MCF 10A (cell line): ENCODE measurements at regions of chr1 and their contacts with region 1.

Region 1: DNA sequence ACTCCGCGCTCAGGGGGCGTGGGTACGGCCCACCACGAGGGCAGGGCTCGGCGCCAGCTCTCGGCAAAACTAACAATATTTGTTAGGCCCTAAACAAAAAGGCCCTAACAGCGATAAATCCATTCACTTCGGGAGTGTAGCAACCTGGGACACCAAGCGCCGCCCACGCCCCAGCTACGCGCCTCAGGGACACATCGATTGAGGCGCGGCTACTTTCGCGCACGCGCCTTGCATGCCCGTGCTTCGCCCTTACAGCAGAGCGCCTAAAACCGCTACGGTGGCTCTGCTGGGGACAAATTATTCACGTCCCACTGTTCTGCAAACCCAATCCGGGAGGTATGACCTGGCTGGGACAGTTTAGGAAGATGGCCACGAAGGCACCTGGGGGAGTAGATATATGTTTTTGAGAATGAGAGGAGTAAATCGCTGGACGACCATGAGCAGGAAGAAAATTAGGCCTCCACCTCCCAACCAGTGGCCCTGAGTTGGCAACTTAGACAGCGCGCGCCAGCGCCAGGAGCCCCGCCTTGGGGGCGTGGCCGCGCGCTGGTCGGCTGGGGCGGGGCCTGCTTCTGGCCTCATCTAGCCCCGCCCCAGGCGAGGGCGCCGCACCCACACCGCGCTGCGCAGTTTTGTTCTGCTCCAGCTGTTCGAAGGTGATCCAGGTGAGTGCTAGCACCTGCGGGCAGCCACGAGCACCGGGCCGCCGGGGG is at the start of gene MGST3:
- DNase-seq: peak; percentile 99
- H3K4me3 Mint-ChIP-seq: no peak within 1 kb of the TSS
- H3K27ac Mint-ChIP-seq: no peak within 1 kb of the TSS
- H3K4me1 Mint-ChIP-seq: peaks cover 22% of the 10 kb centered on the region
- H3K27me3 Mint-ChIP-seq: no peaks in the 10 kb centered on the region
- CTCF ChIP-seq: no peak
- total RNA-seq, gene MGST3: 75.5 and 97.1 TPM in 2 replicates

Region 2: DNA sequence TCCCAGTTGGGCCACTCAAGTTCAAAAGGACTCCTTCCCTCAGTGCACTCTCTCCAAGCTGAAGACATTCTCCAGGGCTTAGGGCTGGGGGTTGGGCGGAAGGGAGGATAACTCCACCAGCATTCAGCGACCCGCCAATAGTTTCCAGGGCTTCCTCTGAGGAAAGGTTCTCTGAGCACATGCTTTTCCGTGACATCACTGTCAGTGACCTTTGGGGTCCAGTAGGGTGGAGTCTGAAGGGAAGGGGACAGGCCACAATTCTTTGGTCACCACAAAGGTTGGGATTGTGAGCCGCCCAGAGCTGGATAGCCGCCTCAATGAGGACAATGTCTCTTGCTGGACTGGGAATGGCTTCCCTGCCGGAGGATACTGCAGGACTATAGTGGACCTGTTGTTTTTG is 163.1 kb before region 1 on chr1:
- CTCF ChIA-PET with region 1: no interaction called
- POLR2A ChIA-PET with region 1: no interaction called
- intact Hi-C with region 1: no loop called
- DNase-seq: no peak
- H3K4me3 Mint-ChIP-seq: no peak overlapping the region
- H3K27ac Mint-ChIP-seq: no peak overlapping the region
- H3K4me1 Mint-ChIP-seq: no peaks in the 10 kb centered on the region
- H3K27me3 Mint-ChIP-seq: peaks cover 81% of the 10 kb centered on the region
- CTCF ChIP-seq: no peak

Region 3: GRCh38 chr1:165645654-165646366 is 15.0 kb after region 1 on chr1:
- CTCF ChIA-PET with region 1: interaction called, 10 read pairs
- POLR2A ChIA-PET with region 1: interaction called, 46 read pairs
- intact Hi-C with region 1: no loop called
- DNase-seq: peak; percentile 42
- H3K4me3 Mint-ChIP-seq: no peak overlapping the region
- H3K27ac Mint-ChIP-seq: no peak overlapping the region
- H3K4me1 Mint-ChIP-seq: peaks cover 17% of the 10 kb centered on the region
- H3K27me3 Mint-ChIP-seq: no peaks in the 10 kb centered on the region
- CTCF ChIP-seq: no peak

Region 4: GRCh38 chr1:165659581-165659895 is 28.8 kb after region 1 on chr1:
- CTCF ChIA-PET with region 1: interaction called, 3 read pairs
- POLR2A ChIA-PET with region 1: interaction called, 35 read pairs
- intact Hi-C with region 1: no loop called
- DNase-seq: no peak
- H3K4me3 Mint-ChIP-seq: no peak overlapping the region
- H3K27ac Mint-ChIP-seq: no peak overlapping the region
- H3K4me1 Mint-ChIP-seq: no peaks in the 10 kb centered on the region
- H3K27me3 Mint-ChIP-seq: no peaks in the 10 kb centered on the region
- CTCF ChIP-seq: no peak

Region 5: GRCh38 chr1:165678509-165678908 is 47.7 kb after region 1 on chr1:
- CTCF ChIA-PET with region 1: no interaction called
- POLR2A ChIA-PET with region 1: interaction called, 6 read pairs
- intact Hi-C with region 1: loop called (anchors 5 kb)
- DNase-seq: no peak
- H3K4me3 Mint-ChIP-seq: no peak overlapping the region
- H3K27ac Mint-ChIP-seq: no peak overlapping the region
- H3K4me1 Mint-ChIP-seq: peaks cover 6% of the 10 kb centered on the region
- H3K27me3 Mint-ChIP-seq: no peaks in the 10 kb centered on the region
- CTCF ChIP-seq: no peak

Region 6: GRCh38 chr1:165768513-165769394 is 138.0 kb after region 1 on chr1 and contains the start of gene TMCO1:
- CTCF ChIA-PET with region 1: interaction called, 4 read pairs
- POLR2A ChIA-PET with region 1: interaction called, 19 read pairs
- intact Hi-C with region 1: loop called (anchors 2 kb)
- DNase-seq: peak; percentile 100
- H3K4me3 Mint-ChIP-seq: peak within 1 kb of the TSS; percentile 95
- H3K27ac Mint-ChIP-seq: peak within 1 kb of the TSS; percentile 98
- H3K4me1 Mint-ChIP-seq: peaks cover 46% of the 10 kb centered on the region
- H3K27me3 Mint-ChIP-seq: no peaks in the 10 kb centered on the region
- CTCF ChIP-seq: no peak
- total RNA-seq, gene TMCO1: 158 and 202 TPM in 2 replicates

Region 7: DNA sequence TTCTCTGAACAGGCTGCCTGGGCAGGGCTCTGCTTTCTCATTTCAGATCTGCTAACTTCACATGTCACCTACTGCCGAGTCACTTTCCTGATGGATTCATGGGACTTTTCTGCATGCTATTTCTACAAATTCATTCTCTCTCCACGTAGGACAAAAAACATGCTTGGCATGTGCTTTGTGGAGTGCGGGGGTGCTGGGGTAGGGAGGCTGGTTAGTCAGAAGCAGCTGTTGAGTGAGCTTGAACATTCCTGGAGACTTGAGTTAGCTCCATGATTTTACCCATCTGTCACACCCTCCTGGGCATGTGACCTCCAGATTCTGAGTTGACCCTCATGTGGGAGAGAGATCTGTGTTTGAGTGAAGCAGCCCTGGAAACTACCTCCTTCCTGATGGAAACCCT is 268.1 kb after region 1 on chr1:
- CTCF ChIA-PET with region 1: interaction called, 4 read pairs
- POLR2A ChIA-PET with region 1: interaction called, 20 read pairs
- intact Hi-C with region 1: loop called (anchors 5 kb)
- DNase-seq: peak; percentile 73
- H3K4me3 Mint-ChIP-seq: peak overlapping the region; percentile 56
- H3K27ac Mint-ChIP-seq: peak overlapping the region; percentile 60
- H3K4me1 Mint-ChIP-seq: peaks cover 65% of the 10 kb centered on the region
- H3K27me3 Mint-ChIP-seq: no peaks in the 10 kb centered on the region
- CTCF ChIP-seq: no peak